Mucosa of descending colon (tissue), 3 donors: ENCODE measurements at regions of chr6 and their contacts with region 1.

Region 1: GRCh38 chr6:30533460-30534294 is 22.6 kb downstream of the GNL1 start:
- DNase-seq: no peak
- ATAC-seq: peak; percentile 60
- H3K4me3 ChIP-seq: no peak overlapping the region
- H3K4me1 ChIP-seq: no peaks in the 10 kb centered on the region
- CTCF ChIP-seq: no peak

Region 2: GRCh38 chr6:30489081-30490025 is 44.3 kb before region 1 on chr6 and contains the start of gene HLA-E:
- intact Hi-C with region 1: loop called in 1 of 2 experiments (anchors 5 kb)
- DNase-seq: peak; percentile 85 to 97 (median 94)
- ATAC-seq: peak; percentile 95
- H3K4me3 ChIP-seq: peak within 1 kb of the TSS; percentile 95
- H3K4me1 ChIP-seq: peaks cover 25% of the 10 kb centered on the region
- CTCF ChIP-seq: no peak
- total RNA-seq, gene HLA-E: 316 to 631 (median 383) TPM

Region 3: DNA sequence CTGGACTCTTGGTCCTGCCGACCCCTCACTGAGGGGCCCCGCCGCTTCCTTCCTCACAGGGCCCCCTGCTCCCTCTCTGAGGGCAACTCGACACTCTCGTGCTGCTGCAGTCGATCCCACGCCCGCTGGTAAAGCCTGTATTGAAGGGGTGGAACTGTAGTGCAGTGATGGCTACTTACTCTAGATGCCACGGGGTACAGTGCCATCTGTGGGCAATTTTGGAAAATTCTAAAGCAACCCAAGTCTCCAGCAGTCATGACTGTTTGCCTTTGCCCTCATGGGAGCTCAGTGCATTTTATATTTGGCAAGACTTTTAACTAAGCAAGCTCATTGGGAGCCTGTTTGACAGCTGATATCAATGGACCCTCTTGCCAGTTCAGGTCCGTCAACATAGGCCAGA is 106.8 kb after region 1 on chr6:
- intact Hi-C with region 1: no loop called
- DNase-seq: no peak
- ATAC-seq: peak; percentile 13
- H3K4me3 ChIP-seq: no peak overlapping the region
- H3K4me1 ChIP-seq: peaks cover 7% of the 10 kb centered on the region
- CTCF ChIP-seq: no peak